ENCODE measurements at regions of chr6 and their contacts with region 1.

Region 1: GRCh38 chr6:36623547-36624459 is 29.6 kb downstream of the SRSF3 start:
- DNase-seq: peak; percentile 87

Region 2: GRCh38 chr6:36302227-36302976 is 321.4 kb before region 1 on chr6:
- in situ Hi-C with region 1: no loop called
- DNase-seq: peak; percentile 59

Region 3: DNA sequence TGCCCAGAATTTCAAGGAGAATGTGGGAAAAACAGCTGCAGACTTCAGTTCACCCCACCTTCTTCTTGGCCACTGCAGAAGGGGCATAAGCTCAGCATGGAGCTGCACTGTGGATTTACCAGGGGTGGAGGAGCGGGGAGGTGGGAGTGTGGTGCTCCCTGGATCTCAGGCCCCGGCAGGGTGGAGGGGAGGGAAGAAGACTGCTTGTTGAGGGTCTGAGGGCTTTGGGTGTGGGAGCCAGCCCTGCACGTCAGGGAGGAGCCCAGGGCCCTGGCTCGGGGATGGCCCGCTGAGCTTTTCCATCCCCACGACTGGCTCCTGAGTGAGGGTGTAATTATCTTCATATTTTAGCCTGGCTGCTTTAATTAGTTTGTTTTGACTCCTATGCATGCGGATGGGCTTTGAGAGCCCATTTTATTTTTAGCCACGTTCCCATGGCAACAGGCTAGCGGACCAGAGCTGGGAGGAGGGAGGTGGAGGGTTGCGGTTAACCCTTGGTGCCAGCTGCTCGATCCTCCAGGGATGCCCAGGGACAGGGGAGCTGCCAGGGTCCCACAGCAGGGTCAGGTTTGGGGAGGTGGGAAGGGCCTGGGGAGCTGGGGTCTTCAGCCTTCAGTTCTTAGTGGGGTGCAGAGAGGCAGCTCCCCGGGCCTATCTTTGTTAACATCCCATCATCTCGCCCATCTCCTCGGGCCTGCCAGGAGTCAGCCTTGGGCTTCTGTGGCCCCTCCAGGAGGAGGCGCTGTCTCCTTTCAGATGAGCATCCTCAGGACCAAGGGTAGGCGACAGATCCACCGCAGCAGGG is 142.0 kb after region 1 on chr6:
- in situ Hi-C with region 1: loop called (anchors 25 kb)
- DNase-seq: peak; percentile 26

Measured in Caki2 (cell line).